Heart left ventricle (tissue), 16 donors: ENCODE measurements at regions of chr5 and their contacts with region 1.

Region 1: DNA sequence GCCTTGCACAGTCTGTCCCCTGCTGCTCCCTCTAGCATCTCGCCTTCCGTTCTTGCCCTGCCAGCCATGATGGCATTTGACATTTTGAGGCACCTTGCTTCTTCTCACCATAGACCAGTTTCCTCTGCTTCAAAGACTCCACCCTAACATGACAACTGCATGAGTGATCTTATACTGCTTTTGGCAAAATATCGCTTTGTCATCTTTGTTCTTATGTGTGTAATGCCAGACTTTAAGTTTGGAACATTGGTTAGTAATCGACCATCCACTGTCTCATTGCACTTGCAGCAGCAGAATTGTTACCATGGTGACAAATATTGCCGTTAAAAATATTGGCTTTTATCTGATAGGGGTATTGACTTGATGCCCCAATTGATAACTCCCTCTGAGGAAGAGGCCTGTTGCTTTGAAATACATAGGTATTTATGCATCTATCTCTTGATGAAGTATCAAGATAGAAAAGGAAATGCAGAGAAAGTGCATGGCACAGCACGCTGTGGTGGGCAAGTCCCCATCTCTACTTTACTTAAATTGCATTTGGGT is 6.8 kb downstream of the GARIN3 start:
- DNase-seq: no peak
- ATAC-seq: no peak
- H3K4me3 ChIP-seq: no peak overlapping the region
- H3K27ac ChIP-seq: peak overlapping the region in 1 of 12 donors; percentile 42
- H3K4me1 ChIP-seq: peaks cover 0 to 5% (median 0%) of the 10 kb centered on the region in 12 donors
- H3K27me3 ChIP-seq: peaks cover 0 to 13% (median 0%) of the 10 kb centered on the region in 9 donors
- CTCF ChIP-seq: no peak
- POLR2A ChIP-seq: no peak

Region 2: DNA sequence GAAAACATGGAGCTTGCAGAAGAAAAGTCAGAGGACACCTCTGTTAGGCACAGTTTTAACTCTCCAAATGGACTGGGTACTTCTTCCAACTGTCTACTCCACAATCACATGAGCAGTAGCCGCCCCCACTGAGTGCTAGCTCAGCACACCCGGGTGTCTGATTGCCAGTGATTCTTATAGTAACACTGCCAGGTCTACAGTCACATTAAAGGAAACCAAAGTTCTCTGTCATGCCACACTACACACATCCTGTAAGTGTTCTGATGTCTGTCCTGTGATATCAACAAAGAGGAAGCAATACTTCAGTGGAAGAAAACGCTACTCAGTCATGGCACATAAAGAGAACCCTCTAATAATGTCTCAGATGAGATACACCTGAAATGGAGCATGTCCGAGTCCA is 50.3 kb before region 1 on chr5 and contains the start of gene HAVCR2:
- intact Hi-C with region 1: no loop called
- DNase-seq: peak in 3 of 5 donors; percentile 24 to 55 (median 30)
- ATAC-seq: peak in 3 of 4 donors; percentile 55 to 86 (median 68)
- H3K4me3 ChIP-seq: peak within 1 kb of the TSS in 9 of 12 donors; percentile 7 to 61 (median 25)
- H3K27ac ChIP-seq: peak within 1 kb of the TSS in 5 of 12 donors; percentile 9 to 87 (median 24)
- H3K4me1 ChIP-seq: peaks cover 0 to 38% (median 0%) of the 10 kb centered on the region in 12 donors
- H3K27me3 ChIP-seq: no peaks in the 10 kb centered on the region
- CTCF ChIP-seq: no peak
- POLR2A ChIP-seq: no peak
- total RNA-seq, gene HAVCR2: 1.0 to 39.2 (median 1.9) TPM

Region 3: DNA sequence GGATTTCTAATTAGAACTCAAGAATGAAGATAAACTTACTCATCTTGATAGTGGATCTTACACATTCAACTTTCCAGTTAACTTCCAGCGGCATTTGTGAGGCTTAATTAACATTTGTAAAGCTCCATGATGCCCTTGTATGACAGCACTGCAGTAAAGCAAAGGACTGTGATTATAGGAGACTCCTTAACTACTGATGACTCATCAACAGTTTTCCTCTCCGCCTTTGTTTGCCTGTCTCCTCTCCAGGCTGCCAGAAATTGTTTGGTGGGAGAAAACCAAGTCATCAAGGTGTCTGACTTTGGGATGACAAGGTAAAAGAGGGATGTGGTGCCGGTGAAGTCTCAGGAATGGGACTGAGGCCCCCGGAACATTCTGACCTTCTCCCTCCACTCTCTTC is 86.2 kb after region 1 on chr5:
- intact Hi-C with region 1: loop called in 1 of 10 experiments (anchors 10 kb)
- DNase-seq: no peak
- ATAC-seq: no peak
- H3K4me3 ChIP-seq: no peak overlapping the region
- H3K27ac ChIP-seq: no peak overlapping the region
- H3K4me1 ChIP-seq: peaks cover 0 to 26% (median 0%) of the 10 kb centered on the region in 12 donors
- H3K27me3 ChIP-seq: no peaks in the 10 kb centered on the region
- CTCF ChIP-seq: no peak
- POLR2A ChIP-seq: no peak